ENCODE measurements at regions of chr3 and their contacts with region 1.

Region 1: DNA sequence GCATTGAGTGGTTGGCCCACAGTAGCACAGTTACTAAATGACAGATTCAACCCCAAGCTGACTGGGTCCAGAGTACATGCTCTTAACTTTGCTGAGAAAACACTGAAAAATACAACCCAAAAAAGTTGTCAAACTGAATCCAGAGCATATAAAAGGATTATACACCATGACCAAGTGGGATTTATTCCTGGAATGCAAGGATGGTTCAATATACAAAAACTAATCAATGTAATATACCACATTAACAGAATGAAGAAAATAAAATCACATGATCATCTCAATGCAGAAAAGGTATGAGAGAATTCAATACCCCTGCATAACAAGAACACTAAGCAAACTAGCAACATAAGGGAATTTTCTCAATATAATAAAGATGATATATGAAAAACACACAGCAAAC is 98.5 kb downstream of the STAG1 start:
- DNase-seq: no peak
- ATAC-seq: no peak
- H3K4me3 ChIP-seq: no peak overlapping the region
- H3K27ac ChIP-seq: no peak overlapping the region
- H3K4me1 ChIP-seq: no peaks in the 10 kb centered on the region
- H3K27me3 ChIP-seq: no peaks in the 10 kb centered on the region
- CTCF ChIP-seq: no peak

Region 2: DNA sequence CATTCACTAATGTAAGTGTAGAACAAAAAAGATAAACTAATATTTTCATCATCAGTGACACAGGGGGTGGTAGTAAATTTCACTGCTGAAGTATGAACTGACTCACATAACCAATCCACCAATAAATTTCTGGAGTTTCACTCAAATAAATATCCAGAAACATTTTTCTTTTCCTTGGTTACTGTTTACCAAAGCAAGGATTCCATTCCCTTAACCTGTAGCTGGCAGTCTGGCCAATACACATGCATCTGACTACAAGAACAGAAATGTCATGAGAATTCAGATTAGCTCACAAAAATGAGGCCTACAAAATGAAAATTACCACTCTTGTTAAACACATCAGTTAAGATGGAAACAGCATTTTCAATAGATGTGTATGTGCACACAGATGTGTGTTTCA is 18.3 kb after region 1 on chr3:
- CTCF ChIA-PET with region 1: no interaction called
- POLR2A ChIA-PET with region 1: interaction called, 5 read pairs
- in situ Hi-C with region 1: no loop called
- intact Hi-C with region 1: loop called (anchors 2 kb)
- DNase-seq: no peak
- ATAC-seq: no peak
- H3K4me3 ChIP-seq: no peak overlapping the region
- H3K27ac ChIP-seq: no peak overlapping the region
- H3K4me1 ChIP-seq: no peaks in the 10 kb centered on the region
- H3K27me3 ChIP-seq: no peaks in the 10 kb centered on the region
- CTCF ChIP-seq: no peak

Region 3: GRCh38 chr3:136741063-136741462 is 87.4 kb after region 1 on chr3:
- CTCF ChIA-PET with region 1: no interaction called
- POLR2A ChIA-PET with region 1: no interaction called
- in situ Hi-C with region 1: no loop called
- intact Hi-C with region 1: no loop called
- DNase-seq: no peak
- ATAC-seq: peak; percentile 26; the same call in 1 of the 2 replicates
- H3K4me3 ChIP-seq: no peak overlapping the region
- H3K27ac ChIP-seq: no peak overlapping the region
- H3K4me1 ChIP-seq: peaks cover 12% of the 10 kb centered on the region; the same call in 1 of the 2 replicates
- H3K27me3 ChIP-seq: no peaks in the 10 kb centered on the region
- CTCF ChIP-seq: no peak

Region 4: GRCh38 chr3:136752422-136753325 is 99.0 kb after region 1 on chr3:
- CTCF ChIA-PET with region 1: no interaction called
- POLR2A ChIA-PET with region 1: no interaction called
- in situ Hi-C with region 1: no loop called
- intact Hi-C with region 1: no loop called
- DNase-seq: peak; percentile 91
- ATAC-seq: peak; percentile 91
- H3K4me3 ChIP-seq: peak overlapping the region; percentile 65 to 89
- H3K27ac ChIP-seq: peak overlapping the region; percentile 100
- H3K4me1 ChIP-seq: peaks cover 26% of the 10 kb centered on the region
- H3K27me3 ChIP-seq: no peaks in the 10 kb centered on the region
- CTCF ChIP-seq: no peak; the same call in none of the 2 replicates

Region 5: DNA sequence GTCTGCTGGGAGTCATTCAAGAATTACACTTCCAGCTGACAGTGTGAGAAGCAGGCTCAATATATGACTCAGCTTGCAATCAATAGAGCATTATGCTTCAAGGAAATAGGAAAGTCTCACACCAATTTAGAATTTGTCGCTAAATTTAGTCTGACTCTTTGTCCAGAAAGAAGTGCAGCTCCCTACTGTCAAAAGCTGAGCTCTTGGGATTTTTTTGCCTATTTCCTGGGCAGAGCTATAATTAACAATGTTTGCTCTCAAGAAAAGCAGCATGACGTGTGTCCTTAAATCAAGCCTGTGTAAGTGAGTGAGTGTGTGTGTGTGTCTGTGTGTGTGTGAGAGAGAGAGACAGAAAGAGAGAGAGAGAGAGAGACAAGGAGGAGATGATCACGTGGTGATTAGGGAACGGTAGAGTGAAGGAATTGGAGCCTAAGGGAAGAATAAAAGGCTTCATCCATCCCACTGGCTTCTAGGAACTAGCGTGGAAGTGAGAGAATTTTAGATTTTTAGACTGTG is 148.9 kb after region 1 on chr3:
- CTCF ChIA-PET with region 1: no interaction called
- POLR2A ChIA-PET with region 1: no interaction called
- in situ Hi-C with region 1: no loop called
- intact Hi-C with region 1: no loop called
- DNase-seq: no peak
- ATAC-seq: no peak
- H3K4me3 ChIP-seq: no peak overlapping the region
- H3K27ac ChIP-seq: no peak overlapping the region
- H3K4me1 ChIP-seq: no peaks in the 10 kb centered on the region
- H3K27me3 ChIP-seq: no peaks in the 10 kb centered on the region
- CTCF ChIP-seq: no peak